ENCODE measurements at regions of chr3 and their contacts with region 1.

Region 1: DNA sequence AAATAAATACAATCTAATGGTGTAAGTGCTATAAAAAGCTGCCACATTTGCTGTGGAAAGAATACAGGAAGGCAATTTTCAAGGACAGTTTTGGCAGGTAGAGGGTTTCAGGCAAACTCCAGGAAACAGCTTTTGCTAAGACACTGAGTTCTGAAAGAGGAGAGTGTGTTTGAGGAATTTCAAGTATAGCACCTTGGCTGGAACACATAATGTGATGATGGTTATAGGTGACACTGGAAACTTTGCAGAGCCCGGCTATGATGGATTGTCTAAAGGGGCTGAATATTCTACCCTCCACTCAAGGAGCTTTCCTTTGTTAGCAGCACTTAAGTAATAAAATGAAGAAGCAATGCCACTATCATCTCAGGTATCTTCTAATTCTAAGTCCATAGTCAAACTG is 209.4 kb upstream of the TGFBR2 start:
- DNase-seq: no peak
- H3K4me3 ChIP-seq: no peak overlapping the region
- H3K27ac ChIP-seq: no peak overlapping the region
- H3K4me1 ChIP-seq: peaks cover 12% of the 10 kb centered on the region
- H3K27me3 ChIP-seq: no peaks in the 10 kb centered on the region
- CTCF ChIP-seq: no peak
- POLR2A ChIP-seq: no peak

Region 2: GRCh38 chr3:30458376-30459171 is 61.5 kb after region 1 on chr3:
- CTCF ChIA-PET with region 1: interaction called, 3 read pairs
- POLR2A ChIA-PET with region 1: no interaction called
- dilution Hi-C with region 1: no loop called
- intact Hi-C with region 1: loop called (anchors 1 kb)
- DNase-seq: no peak
- H3K4me3 ChIP-seq: no peak overlapping the region
- H3K27ac ChIP-seq: no peak overlapping the region
- H3K4me1 ChIP-seq: peaks cover 4% of the 10 kb centered on the region
- H3K27me3 ChIP-seq: no peaks in the 10 kb centered on the region
- CTCF ChIP-seq: no peak
- POLR2A ChIP-seq: no peak

Region 3: GRCh38 chr3:31960793-31961431 is 1563.9 kb after region 1 on chr3:
- CTCF ChIA-PET with region 1: no interaction called
- POLR2A ChIA-PET with region 1: no interaction called
- dilution Hi-C with region 1: no loop called
- intact Hi-C with region 1: no loop called
- DNase-seq: no peak
- H3K4me3 ChIP-seq: no peak overlapping the region
- H3K27ac ChIP-seq: no peak overlapping the region
- H3K4me1 ChIP-seq: peaks cover 24% of the 10 kb centered on the region
- H3K27me3 ChIP-seq: no peaks in the 10 kb centered on the region
- CTCF ChIP-seq: no peak
- POLR2A ChIP-seq: no peak